Calu3 (cell line): ENCODE measurements at regions of chr15 and their contacts with region 1.

Region 1: GRCh38 chr15:71800835-71801745 is 9.3 kb upstream of the NR2E3 start:
- DNase-seq: peak; percentile 78
- H3K4me3 Mint-ChIP-seq: no peak overlapping the region
- H3K27ac Mint-ChIP-seq: peak overlapping the region; percentile 1
- H3K4me1 Mint-ChIP-seq: peaks cover 34% of the 10 kb centered on the region
- H3K27me3 Mint-ChIP-seq: no peaks in the 10 kb centered on the region
- CTCF ChIP-seq: peak; percentile 83

Region 2: GRCh38 chr15:71154607-71155200 is 646.4 kb before region 1 on chr15:
- CTCF ChIA-PET with region 1: no interaction called
- intact Hi-C with region 1: no loop called
- DNase-seq: no peak
- H3K4me3 Mint-ChIP-seq: no peak overlapping the region
- H3K27ac Mint-ChIP-seq: no peak overlapping the region
- H3K4me1 Mint-ChIP-seq: peaks cover 11% of the 10 kb centered on the region
- H3K27me3 Mint-ChIP-seq: no peaks in the 10 kb centered on the region
- CTCF ChIP-seq: no peak

Region 3: GRCh38 chr15:71448688-71449114 is 352.4 kb before region 1 on chr15:
- CTCF ChIA-PET with region 1: no interaction called
- intact Hi-C with region 1: loop called (anchors 2 kb)
- DNase-seq: peak; percentile 72
- H3K4me3 Mint-ChIP-seq: no peak overlapping the region
- H3K27ac Mint-ChIP-seq: no peak overlapping the region
- H3K4me1 Mint-ChIP-seq: no peaks in the 10 kb centered on the region
- H3K27me3 Mint-ChIP-seq: no peaks in the 10 kb centered on the region
- CTCF ChIP-seq: peak; percentile 73

Region 4: DNA sequence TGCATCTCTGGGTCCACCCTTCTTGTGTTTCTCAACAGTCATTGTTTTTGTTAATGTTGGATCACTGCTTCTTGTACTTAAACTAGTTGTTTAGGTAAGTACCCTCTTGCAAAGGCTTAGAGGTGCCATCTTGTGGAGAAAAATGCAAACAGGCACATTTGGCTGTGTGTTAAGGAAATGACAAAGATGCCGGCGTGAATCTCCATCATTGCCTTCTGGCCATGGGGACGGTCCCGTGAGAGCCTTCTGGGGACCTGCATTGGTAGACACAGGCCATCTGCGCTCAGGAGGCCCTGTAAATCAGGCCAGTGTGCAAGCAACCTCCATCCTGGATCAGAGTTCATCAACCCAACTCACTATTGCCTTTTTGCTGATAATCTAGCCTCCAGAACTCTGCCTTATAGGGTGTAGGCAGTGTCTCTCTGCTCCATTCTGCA is 149.3 kb before region 1 on chr15:
- CTCF ChIA-PET with region 1: no interaction called
- intact Hi-C with region 1: loop called (anchors 5 kb)
- DNase-seq: peak; percentile 44
- H3K4me3 Mint-ChIP-seq: no peak overlapping the region
- H3K27ac Mint-ChIP-seq: no peak overlapping the region
- H3K4me1 Mint-ChIP-seq: peaks cover 7% of the 10 kb centered on the region
- H3K27me3 Mint-ChIP-seq: no peaks in the 10 kb centered on the region
- CTCF ChIP-seq: no peak

Region 5: GRCh38 chr15:71752604-71753289 is 48.3 kb before region 1 on chr15:
- CTCF ChIA-PET with region 1: interaction called, 30 read pairs
- intact Hi-C with region 1: loop called (anchors 1 kb)
- DNase-seq: peak; percentile 82
- H3K4me3 Mint-ChIP-seq: no peak overlapping the region
- H3K27ac Mint-ChIP-seq: peak overlapping the region; percentile 78
- H3K4me1 Mint-ChIP-seq: peaks cover 61% of the 10 kb centered on the region
- H3K27me3 Mint-ChIP-seq: no peaks in the 10 kb centered on the region
- CTCF ChIP-seq: peak; percentile 58